Activated CD4-positive, alpha-beta T cell treated with anti-CD3 and anti-CD28 coated beads, Interleukin-2, amount 10 ng/mL, durations not matched to agents 24 days and 14 days (primary cell): ENCODE measurements at regions of chr1 and their contacts with region 1.

Region 1: DNA sequence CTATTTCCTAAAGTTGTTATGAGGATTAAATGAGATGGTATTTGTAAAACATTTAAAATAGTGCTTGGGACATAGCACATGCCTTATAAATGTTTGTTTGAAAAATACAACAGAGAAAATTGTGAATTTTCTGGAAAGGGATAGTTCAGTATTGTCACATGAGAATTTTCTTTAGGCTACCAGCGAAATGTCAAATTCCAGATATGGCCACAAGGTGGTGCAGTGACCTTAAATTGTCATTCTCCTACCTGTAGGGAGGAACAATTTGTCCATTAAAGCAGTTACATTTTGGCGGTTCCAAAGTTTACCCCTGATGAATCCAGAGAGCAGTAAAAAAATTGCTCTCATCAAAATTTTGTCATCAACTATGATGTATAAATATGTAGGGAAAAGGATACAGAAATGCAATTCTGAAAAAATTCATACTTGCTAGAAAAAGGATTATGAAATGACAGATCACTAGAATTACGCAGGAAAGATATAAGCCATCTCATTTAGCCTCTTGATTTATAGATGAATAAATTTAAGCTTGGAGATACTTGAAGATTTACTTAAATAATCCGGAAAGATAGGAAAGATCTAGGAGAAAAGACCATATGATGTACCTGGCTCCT is 50.2 kb upstream of the TSHB start:
- DNase-seq: peak; percentile 88
- H3K4me3 Mint-ChIP-seq: no peak overlapping the region
- H3K27ac Mint-ChIP-seq: no peak overlapping the region
- H3K4me1 Mint-ChIP-seq: no peaks in the 10 kb centered on the region
- H3K27me3 Mint-ChIP-seq: peaks cover 18% of the 10 kb centered on the region

Region 2: GRCh38 chr1:114868766-114869165 is 110.6 kb before region 1 on chr1:
- intact Hi-C with region 1: no loop called
- DNase-seq: no peak
- H3K4me3 Mint-ChIP-seq: no peak overlapping the region
- H3K27ac Mint-ChIP-seq: no peak overlapping the region
- H3K4me1 Mint-ChIP-seq: no peaks in the 10 kb centered on the region
- H3K27me3 Mint-ChIP-seq: peaks cover 11% of the 10 kb centered on the region

Region 3: GRCh38 chr1:114997510-114998289 is 18.3 kb after region 1 on chr1:
- intact Hi-C with region 1: no loop called
- DNase-seq: no peak
- H3K4me3 Mint-ChIP-seq: no peak overlapping the region
- H3K27ac Mint-ChIP-seq: no peak overlapping the region
- H3K4me1 Mint-ChIP-seq: no peaks in the 10 kb centered on the region
- H3K27me3 Mint-ChIP-seq: peaks cover 15% of the 10 kb centered on the region

Region 4: GRCh38 chr1:115052454-115053083 is 73.2 kb after region 1 on chr1:
- intact Hi-C with region 1: loop called (anchors 1 kb)
- DNase-seq: peak; percentile 85
- H3K4me3 Mint-ChIP-seq: no peak overlapping the region
- H3K27ac Mint-ChIP-seq: no peak overlapping the region
- H3K4me1 Mint-ChIP-seq: peaks cover 7% of the 10 kb centered on the region
- H3K27me3 Mint-ChIP-seq: peaks cover 8% of the 10 kb centered on the region

Region 5: DNA sequence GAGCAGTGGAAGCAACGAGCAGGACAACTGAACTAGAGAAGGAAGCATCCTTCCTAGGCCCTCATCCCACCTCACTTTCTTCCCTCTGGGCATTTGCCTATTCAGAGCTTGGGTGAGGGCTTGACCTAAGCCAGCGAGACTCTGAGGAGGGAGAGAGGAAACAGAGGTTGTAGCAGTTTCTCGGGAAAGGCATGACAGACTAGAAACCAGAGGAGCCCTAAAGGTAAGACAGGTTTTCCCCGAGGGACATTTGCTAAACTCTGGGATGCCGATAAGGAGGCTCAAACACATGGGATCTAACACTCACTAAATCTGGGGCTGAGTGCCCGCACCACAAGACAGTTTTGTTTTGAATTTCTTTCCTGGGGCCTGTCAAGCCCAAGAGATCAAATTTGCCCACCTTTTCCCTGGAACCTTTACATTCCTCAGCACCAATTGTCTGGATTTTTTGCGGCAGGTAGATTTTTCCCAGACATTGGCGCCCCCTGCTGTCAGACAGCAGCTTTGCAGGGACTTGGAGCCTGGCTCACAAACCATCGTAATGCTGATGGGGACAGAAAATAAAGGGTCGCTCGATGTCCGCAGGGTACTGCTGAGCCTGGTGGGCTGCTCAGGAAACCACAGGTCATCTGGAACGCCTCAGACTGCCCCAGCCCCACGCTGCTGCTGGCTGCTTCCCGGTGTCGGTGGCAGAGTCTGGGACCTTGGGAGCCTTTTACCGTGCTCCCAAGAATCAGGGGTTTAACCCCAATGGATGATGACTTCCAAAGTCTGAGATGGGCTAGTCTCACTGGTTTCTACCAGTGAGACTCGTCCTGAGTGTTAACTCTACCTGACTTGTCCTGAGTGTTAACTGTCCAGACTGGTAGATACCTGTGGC is 133.4 kb after region 1 on chr1:
- intact Hi-C with region 1: loop called (anchors 1 kb)
- DNase-seq: peak; percentile 85
- H3K4me3 Mint-ChIP-seq: no peak overlapping the region
- H3K27ac Mint-ChIP-seq: no peak overlapping the region
- H3K4me1 Mint-ChIP-seq: peaks cover 2% of the 10 kb centered on the region
- H3K27me3 Mint-ChIP-seq: peaks cover 1% of the 10 kb centered on the region

Region 6: DNA sequence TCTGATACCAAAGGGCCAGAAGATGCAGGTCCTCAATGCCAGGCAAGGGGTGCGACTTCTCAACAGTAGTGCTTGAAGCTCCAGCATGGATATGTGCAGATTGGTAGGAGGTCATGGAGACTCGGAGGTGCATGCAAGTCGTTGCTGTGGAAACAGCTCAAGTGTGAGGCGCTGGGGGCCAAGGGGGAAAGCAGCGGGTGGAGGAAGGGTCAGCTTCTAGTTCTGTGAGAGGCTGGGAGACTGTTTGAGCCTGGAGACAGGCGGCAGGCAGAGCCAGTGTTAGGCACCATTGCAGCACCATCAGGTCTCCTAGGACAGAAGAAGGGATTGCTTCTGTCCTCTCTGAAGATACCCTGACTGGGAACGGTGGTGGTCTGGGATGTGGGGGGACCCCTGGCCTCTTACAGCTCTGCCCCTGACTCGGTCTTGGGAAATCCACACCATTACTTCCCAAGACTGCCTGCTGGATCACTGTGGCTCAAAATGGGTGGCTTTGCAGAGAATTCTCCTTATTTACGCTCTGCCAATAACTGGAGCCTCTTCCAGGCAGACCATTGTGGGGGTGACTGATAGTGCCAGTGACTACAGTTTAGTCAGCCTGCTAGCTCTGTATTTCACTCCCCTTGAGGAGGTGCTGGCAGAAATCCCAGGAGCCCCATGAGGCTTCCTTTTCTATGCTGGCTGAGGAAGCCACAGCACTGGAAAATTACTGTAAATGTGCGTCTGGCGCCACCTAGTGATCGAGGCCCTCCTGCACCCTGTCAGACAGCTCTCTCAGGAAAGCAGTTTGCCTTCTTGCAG is 616.1 kb after region 1 on chr1:
- intact Hi-C with region 1: loop called (anchors 10 kb)
- DNase-seq: peak; percentile 90
- H3K4me3 Mint-ChIP-seq: no peak overlapping the region
- H3K27ac Mint-ChIP-seq: no peak overlapping the region
- H3K4me1 Mint-ChIP-seq: no peaks in the 10 kb centered on the region
- H3K27me3 Mint-ChIP-seq: peaks cover 4% of the 10 kb centered on the region